ENCODE measurements at regions of chr15 and their contacts with region 1.

Region 1: DNA sequence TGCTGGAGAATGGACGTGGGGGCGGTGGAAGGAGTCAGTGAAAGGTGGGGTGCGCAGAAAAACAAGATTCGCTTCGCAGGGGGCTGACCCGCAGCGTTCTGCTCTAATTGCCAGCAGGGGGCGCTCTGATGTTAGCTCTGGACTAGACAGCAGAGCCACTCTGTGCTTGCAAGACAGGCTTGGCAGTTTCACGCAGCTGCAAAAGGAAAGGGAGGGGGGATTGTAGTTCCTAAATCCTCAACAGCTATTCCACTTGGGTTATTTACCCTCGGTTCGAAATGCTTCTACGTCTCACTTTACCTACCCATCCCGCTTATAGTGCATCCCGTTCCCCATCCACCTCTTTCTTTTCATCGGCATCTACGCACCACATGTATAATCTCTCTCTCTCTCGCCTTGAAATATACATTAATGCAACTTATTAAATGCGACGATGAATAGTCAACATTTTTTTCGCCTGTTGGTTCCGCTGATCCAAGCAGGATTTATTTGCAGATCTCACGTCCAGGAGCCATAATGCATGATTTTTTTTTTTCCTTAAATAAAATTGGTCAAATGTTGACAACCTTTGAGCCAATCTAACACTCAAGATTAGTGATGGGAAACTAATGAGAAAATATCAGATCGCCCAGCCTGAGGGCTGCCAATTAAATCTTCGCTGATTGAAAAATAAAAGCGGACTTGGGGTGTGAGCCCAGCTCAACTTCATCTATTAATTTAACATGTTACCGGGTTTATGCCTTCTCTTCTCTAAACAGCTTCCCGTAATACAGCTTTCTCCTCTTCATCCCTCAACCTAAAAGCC is 216.4 kb downstream of the MEIS2 start:
- DNase-seq: peak; percentile 83 to 87
- H3K4me3 ChIP-seq: peak overlapping the region; percentile 15 to 41
- H3K27ac ChIP-seq: no peak overlapping the region
- H3K4me1 ChIP-seq: peaks cover 0 to 49% (median 37%) of the 10 kb centered on the region in 4 donors
- H3K27me3 ChIP-seq: peaks cover 7 to 84% of the 10 kb centered on the region in 2 donors
- CTCF ChIP-seq: peak; percentile 83 to 85

Region 2: GRCh38 chr15:37100109-37100965 is 216.4 kb after region 1 on chr15 and contains the start of gene MEIS2:
- intact Hi-C with region 1: loop called (anchors 10 kb)
- DNase-seq: peak; percentile 92 to 94
- H3K4me3 ChIP-seq: peak within 1 kb of the TSS; percentile 85 to 90
- H3K27ac ChIP-seq: peak within 1 kb of the TSS; percentile 91 to 95
- H3K4me1 ChIP-seq: peaks cover 0 to 13% (median 5%) of the 10 kb centered on the region in 4 donors
- H3K27me3 ChIP-seq: no peaks in the 10 kb centered on the region
- CTCF ChIP-seq: no peak

Region 3: GRCh38 chr15:37134699-37135131 is 250.8 kb after region 1 on chr15:
- intact Hi-C with region 1: loop called (anchors 5 kb)
- DNase-seq: no peak
- H3K4me3 ChIP-seq: no peak overlapping the region
- H3K27ac ChIP-seq: no peak overlapping the region
- H3K4me1 ChIP-seq: no peaks in the 10 kb centered on the region
- H3K27me3 ChIP-seq: peaks cover 0 to 3% of the 10 kb centered on the region in 2 donors
- CTCF ChIP-seq: peak; percentile 78 to 79

Region 4: GRCh38 chr15:37880009-37880834 is 996.3 kb after region 1 on chr15:
- intact Hi-C with region 1: loop called (anchors 10 kb)
- DNase-seq: no peak
- H3K4me3 ChIP-seq: no peak overlapping the region
- H3K27ac ChIP-seq: no peak overlapping the region
- H3K4me1 ChIP-seq: peaks cover 0 to 34% (median 0%) of the 10 kb centered on the region in 4 donors
- H3K27me3 ChIP-seq: no peaks in the 10 kb centered on the region
- CTCF ChIP-seq: peak; percentile 62 to 68